Endothelial cell of umbilical vein (primary cell): ENCODE measurements at regions of chr6 and their contacts with region 1.

Region 1: GRCh38 chr6:55617272-55617671 is 38.3 kb upstream of the HMGCLL1 start:
- DNase-seq: peak; percentile 60
- H3K4me3 ChIP-seq: no peak overlapping the region
- H3K27ac ChIP-seq: no peak overlapping the region
- H3K4me1 ChIP-seq: no peaks in the 10 kb centered on the region
- H3K27me3 ChIP-seq: no peaks in the 10 kb centered on the region
- CTCF ChIP-seq: peak; percentile 54 to 59
- POLR2A ChIP-seq: no peak

Region 2: GRCh38 chr6:55286824-55287223 is 330.4 kb before region 1 on chr6:
- CTCF ChIA-PET with region 1: no interaction called
- POLR2A ChIA-PET with region 1: no interaction called
- dilution Hi-C with region 1: no loop called
- intact Hi-C with region 1: no loop called
- DNase-seq: no peak
- H3K4me3 ChIP-seq: no peak overlapping the region
- H3K27ac ChIP-seq: no peak overlapping the region
- H3K4me1 ChIP-seq: no peaks in the 10 kb centered on the region
- H3K27me3 ChIP-seq: peaks cover 0 to 2% of the 10 kb centered on the region in 2 experiments
- CTCF ChIP-seq: no peak
- POLR2A ChIP-seq: no peak

Region 3: DNA sequence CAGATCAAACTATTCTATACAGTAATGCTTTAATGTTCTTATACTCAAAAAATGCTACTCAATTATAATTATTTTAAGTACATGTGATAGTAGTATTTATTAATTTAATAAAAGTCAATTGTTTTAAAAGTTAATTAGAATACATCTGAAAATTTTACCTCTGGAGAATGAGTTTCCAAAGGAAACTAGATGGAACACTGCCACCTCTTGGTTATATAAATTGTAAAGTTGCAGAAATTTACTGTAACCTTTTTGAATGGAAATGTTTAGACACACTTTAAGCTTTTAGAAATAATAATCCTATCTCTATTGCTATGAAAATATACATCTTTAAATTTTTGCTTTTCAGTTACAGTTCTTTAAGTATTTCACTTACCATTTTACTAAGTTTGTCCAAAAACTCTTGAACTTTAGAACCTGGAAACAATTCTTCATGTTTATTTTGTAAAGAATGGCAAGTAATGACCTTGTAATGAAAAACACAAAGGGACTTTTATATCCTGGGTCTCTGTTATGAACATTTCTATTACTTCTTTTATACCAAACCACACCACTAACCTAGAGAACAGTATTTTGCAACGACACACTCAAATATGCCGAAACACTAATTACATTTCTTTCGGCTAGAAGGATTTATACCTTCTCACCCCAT is 269.0 kb after region 1 on chr6:
- CTCF ChIA-PET with region 1: interaction called, 86 read pairs
- POLR2A ChIA-PET with region 1: no interaction called
- dilution Hi-C with region 1: no loop called
- intact Hi-C with region 1: loop called (anchors 1 kb)
- DNase-seq: peak; percentile 30
- H3K4me3 ChIP-seq: no peak overlapping the region
- H3K27ac ChIP-seq: no peak overlapping the region
- H3K4me1 ChIP-seq: peaks cover 18% of the 10 kb centered on the region
- H3K27me3 ChIP-seq: no peaks in the 10 kb centered on the region
- CTCF ChIP-seq: peak in 1 of 2 donors; percentile 13
- POLR2A ChIP-seq: no peak

Region 4: DNA sequence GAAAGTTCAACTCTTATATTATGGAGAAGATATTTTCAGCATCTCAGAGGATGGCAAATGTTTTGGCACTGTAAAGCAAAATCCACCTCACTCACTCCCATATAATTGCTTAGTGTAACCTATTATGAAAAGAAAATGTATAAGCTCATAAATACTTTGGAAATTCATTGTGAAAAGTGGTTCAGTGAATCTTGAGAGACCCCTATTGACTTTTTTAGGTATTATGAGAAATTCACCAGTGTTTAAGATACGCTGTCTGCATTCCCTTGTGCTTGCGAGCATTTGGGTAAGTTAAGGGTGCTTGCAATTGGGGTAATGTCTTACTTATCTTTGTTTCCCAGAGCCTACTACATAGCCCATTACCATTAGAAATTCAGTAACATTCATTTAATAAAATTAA is 324.4 kb after region 1 on chr6:
- CTCF ChIA-PET with region 1: interaction called, 30 read pairs
- POLR2A ChIA-PET with region 1: no interaction called
- dilution Hi-C with region 1: no loop called
- intact Hi-C with region 1: no loop called
- DNase-seq: peak; percentile 11
- H3K4me3 ChIP-seq: no peak overlapping the region
- H3K27ac ChIP-seq: no peak overlapping the region
- H3K4me1 ChIP-seq: no peaks in the 10 kb centered on the region
- H3K27me3 ChIP-seq: no peaks in the 10 kb centered on the region
- CTCF ChIP-seq: no peak
- POLR2A ChIP-seq: no peak

Region 5: DNA sequence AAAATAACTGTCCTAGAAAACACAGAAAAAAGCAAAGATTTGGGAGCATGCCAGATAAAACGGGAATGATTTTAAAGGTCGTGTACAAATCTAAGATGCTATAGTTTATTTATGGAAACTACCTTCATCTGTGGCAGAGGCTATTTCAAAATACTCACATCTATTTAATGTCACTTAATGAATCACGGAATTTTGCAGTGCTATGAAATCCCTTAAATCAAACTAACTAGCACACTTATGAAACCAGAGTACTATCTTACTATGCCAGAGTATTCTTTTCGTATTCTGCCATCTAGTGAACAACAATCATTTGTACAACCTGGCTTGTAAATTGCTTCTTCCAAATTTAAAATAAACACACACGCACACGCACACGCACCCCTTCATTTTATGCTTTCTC is 336.1 kb after region 1 on chr6:
- CTCF ChIA-PET with region 1: interaction called, 7 read pairs
- POLR2A ChIA-PET with region 1: no interaction called
- dilution Hi-C with region 1: no loop called
- intact Hi-C with region 1: loop called (anchors 1 kb)
- DNase-seq: peak; percentile 51
- H3K4me3 ChIP-seq: no peak overlapping the region
- H3K27ac ChIP-seq: no peak overlapping the region
- H3K4me1 ChIP-seq: no peaks in the 10 kb centered on the region
- H3K27me3 ChIP-seq: no peaks in the 10 kb centered on the region
- CTCF ChIP-seq: no peak
- POLR2A ChIP-seq: no peak